Activated CD4-positive, alpha-beta T cell treated with anti-CD3 and anti-CD28 coated beads for 36 hours (primary cell): ENCODE measurements at regions of chr17 and their contacts with region 1.

Region 1: DNA sequence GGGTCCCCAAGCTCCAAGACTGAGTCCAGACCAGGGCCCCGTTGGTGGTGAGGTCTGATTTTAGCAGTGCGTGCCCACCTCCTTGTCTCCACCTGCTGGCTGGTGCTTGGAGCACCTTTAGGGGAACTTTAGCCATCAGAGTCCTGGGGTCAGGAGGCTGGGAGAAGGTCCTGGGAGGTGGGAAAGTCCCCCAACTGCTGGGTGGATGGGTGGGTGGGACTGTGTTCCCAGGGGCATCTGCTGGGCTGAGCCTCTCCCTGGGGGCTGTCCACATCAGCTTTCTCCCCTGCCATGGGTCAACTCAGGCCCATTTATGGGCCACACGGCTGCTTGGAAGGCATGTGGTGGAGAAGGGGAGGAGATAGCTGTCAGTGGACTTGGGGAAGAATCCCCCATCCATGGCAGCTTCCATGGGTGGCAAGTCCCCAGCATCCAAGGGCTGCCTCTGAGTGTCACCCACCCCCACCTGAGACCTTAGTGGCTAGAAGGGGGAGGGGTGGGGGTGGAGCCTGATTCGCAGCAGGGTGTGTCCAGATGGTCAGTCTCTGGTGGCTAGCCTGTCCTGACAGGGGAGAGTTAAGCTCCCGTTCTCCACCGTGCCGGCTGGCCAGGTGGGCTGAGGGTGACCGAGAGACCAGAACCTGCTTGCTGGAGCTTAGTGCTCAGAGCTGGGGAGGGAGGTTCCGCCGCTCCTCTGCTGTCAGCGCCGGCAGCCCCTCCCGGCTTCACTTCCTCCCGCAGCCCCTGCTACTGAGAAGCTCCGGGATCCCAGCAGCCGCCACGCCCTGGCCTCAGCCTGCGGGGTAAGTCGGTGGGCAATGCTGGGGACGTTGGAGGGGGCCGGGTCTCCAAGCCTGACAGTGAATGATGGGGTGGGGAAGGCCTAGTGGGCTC is at the start of gene TRPV2:
- DNase-seq: peak; percentile 72
- ATAC-seq: peak; percentile 15
- H3K4me3 Mint-ChIP-seq: peak within 1 kb of the TSS; percentile 100
- H3K27ac Mint-ChIP-seq: peak within 1 kb of the TSS; percentile 99
- H3K4me1 Mint-ChIP-seq: peaks cover 46% of the 10 kb centered on the region
- H3K27me3 Mint-ChIP-seq: no peaks in the 10 kb centered on the region
- total RNA-seq, gene TRPV2: 24.3 to 35.6 TPM

Region 2: DNA sequence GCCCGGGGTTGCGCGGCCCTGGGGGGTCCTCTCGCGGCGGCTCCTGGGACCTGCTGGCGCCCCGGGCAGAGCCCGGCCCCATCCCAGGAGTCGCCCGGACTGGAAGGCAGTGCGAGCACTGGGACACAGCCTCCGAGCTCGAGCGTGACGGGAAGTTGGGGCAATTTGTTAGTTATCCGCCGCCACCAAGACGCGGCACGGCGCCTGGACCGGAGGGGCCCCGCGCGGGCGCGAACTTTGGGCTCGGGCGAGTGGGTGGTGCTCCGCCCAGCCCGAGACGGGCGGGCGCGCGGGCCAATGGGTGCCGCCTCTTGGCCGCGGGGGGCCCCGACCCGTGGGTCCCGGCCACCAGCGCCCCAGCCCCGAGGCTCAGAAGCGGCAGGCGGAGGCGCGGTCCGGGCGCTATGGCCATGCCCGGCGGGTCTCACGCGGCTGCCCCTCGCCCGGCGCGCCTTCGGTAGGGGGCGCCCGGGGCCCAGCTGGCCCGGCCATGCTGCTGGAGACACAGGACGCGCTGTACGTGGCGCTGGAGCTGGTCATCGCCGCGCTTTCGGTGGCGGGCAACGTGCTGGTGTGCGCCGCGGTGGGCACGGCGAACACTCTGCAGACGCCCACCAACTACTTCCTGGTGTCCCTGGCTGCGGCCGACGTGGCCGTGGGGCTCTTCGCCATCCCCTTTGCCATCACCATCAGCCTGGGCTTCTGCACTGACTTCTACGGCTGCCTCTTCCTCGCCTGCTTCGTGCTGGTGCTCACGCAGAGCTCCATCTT is 470.3 kb before region 1 on chr17 and contains the start of gene ADORA2B:
- CTCF ChIA-PET with region 1: no interaction called
- POLR2A ChIA-PET with region 1: no interaction called
- intact Hi-C with region 1: loop called in 1 of 2 experiments (anchors 5 kb)
- DNase-seq: peak; percentile 77
- ATAC-seq: peak; percentile 80
- H3K4me3 Mint-ChIP-seq: peak within 1 kb of the TSS; percentile 72
- H3K27ac Mint-ChIP-seq: peak within 1 kb of the TSS; percentile 52
- H3K4me1 Mint-ChIP-seq: peaks cover 13% of the 10 kb centered on the region
- H3K27me3 Mint-ChIP-seq: peaks cover 42% of the 10 kb centered on the region
- total RNA-seq, gene ADORA2B: 1.9 to 2.2 TPM

Region 3: DNA sequence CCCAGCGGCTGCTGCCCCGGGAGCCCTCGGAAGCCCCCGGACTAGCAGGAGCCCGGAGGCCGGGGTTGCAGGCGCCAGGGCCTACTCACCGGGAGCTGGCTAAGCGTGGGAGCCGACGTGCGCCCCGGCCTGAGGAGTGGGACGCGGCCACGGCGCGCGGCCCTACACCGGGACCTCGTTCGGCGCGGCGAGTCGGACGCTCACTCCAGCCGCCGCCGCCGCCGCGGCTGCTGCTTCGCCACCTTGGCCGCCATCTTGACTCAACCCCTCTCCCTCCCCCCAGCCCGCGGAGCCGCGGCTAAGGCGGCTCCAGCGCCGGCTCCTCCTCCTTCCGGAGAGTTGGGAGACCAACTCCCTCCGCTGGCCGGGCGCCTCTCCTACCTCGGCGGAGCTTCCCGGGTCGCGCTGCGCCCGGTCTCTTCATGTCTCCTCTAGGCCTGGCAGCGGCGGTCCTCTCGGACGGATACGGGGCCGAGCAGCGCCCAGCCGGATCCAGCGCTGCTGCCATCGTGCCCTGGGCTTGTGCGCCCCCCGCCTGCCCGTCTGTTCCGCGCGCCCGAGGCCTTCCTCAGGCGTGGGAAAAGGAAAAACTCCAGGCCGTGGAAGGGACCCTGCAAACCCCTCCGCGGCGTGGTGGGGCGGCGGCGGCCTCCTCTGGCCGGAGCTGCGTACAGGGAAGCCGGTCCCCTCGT is 199.9 kb before region 1 on chr17 and contains the start of gene NCOR1:
- CTCF ChIA-PET with region 1: no interaction called
- POLR2A ChIA-PET with region 1: no interaction called
- intact Hi-C with region 1: loop called in 1 of 2 experiments (anchors 2 kb)
- DNase-seq: peak; percentile 96
- ATAC-seq: peak; percentile 87
- H3K4me3 Mint-ChIP-seq: peak within 1 kb of the TSS; percentile 93
- H3K27ac Mint-ChIP-seq: peak within 1 kb of the TSS; percentile 81
- H3K4me1 Mint-ChIP-seq: peaks cover 42% of the 10 kb centered on the region
- H3K27me3 Mint-ChIP-seq: no peaks in the 10 kb centered on the region
- total RNA-seq, gene NCOR1: 110 to 155 TPM

Region 4: DNA sequence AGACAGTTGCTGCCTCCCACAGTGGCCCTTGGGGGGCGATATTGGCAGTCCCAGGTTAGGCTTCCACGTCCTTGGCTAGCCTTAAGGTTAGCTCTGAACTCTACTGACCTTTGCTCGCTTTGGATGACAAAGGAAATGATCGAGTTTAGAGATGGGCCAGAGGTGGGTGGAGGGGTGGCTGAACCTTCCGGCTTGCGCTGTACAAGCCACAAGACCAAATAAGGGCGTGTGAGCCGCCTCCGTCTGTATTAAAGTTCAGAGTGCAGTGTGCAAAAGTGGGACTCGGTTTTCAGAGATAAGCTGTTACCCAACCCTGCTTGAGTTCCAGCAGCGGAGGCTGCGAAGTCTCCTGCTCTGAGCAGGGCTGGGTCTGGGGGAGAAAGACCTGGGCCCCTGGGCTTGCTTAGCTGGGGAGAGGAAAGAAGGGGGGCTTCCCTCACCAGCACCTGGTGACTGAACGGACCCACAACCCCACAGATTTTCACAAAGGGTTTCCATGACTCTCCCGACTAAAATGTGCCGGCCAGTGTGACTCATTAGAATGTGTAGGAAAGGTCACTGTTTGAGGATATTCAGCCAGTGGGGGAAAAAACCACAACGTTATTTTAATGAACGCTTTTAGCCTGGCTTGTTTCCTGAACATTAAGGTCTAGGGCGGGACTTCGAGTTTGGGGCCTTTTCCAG is 129.2 kb before region 1 on chr17:
- CTCF ChIA-PET with region 1: interaction called, 3 read pairs
- POLR2A ChIA-PET with region 1: no interaction called
- intact Hi-C with region 1: loop called in 1 of 2 experiments (anchors 2 kb)
- DNase-seq: peak; percentile 90
- ATAC-seq: peak; percentile 94
- H3K4me3 Mint-ChIP-seq: peak overlapping the region; percentile 66
- H3K27ac Mint-ChIP-seq: peak overlapping the region; percentile 96
- H3K4me1 Mint-ChIP-seq: peaks cover 53% of the 10 kb centered on the region
- H3K27me3 Mint-ChIP-seq: no peaks in the 10 kb centered on the region

Region 5: GRCh38 chr17:16353317-16354174 is 61.7 kb before region 1 on chr17 and contains the start of gene CENPV:
- CTCF ChIA-PET with region 1: interaction called, 3 read pairs
- POLR2A ChIA-PET with region 1: no interaction called
- intact Hi-C with region 1: loop called in 1 of 2 experiments (anchors 2 kb)
- DNase-seq: peak; percentile 81
- ATAC-seq: peak; percentile 82
- H3K4me3 Mint-ChIP-seq: peak within 1 kb of the TSS; percentile 97
- H3K27ac Mint-ChIP-seq: peak within 1 kb of the TSS; percentile 84
- H3K4me1 Mint-ChIP-seq: peaks cover 22% of the 10 kb centered on the region
- H3K27me3 Mint-ChIP-seq: no peaks in the 10 kb centered on the region
- total RNA-seq, gene CENPV: 100 to 132 TPM

Region 6: DNA sequence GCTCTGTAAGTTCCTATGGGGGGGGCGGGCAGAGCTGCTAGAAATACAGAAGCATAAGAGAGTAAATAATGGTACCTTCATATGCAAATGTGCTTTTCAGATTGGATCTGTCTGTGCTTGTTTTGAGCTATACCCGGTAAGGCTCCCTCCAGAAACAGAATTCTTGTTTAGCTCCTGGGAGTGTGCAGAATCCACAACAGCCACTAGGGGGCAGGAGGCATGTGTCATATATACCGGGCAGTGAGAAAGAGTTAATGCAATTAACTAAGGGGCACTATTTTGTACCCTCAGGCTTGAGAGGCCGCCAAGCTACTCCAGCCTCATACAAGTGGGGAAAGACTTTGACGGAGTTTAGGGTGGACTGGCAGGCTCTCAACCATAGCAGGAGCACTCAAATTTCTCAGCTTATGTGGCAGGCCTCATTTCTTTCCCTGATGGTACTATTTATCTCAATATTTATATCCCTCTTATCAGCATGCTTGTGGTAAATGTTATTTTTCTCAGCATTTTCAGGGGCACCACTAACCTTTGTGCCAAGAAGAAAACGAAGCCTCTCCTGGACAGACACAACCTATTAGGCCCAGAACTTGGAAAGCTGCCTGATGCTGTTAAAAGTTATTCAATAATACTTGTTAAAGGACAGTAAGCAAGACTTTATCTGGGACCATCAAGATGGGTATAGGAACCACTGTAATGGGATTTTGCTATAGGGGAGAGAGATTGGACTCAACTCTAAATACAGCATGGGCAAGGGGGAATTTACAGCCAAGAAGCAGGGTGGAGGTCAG is 51.3 kb before region 1 on chr17:
- CTCF ChIA-PET with region 1: interaction called, 29 read pairs
- POLR2A ChIA-PET with region 1: interaction called, 3 read pairs
- intact Hi-C with region 1: loop called (anchors 1 to 10 kb)
- DNase-seq: peak; percentile 89
- ATAC-seq: peak; percentile 98
- H3K4me3 Mint-ChIP-seq: no peak overlapping the region
- H3K27ac Mint-ChIP-seq: no peak overlapping the region
- H3K4me1 Mint-ChIP-seq: no peaks in the 10 kb centered on the region
- H3K27me3 Mint-ChIP-seq: no peaks in the 10 kb centered on the region

Region 7: GRCh38 chr17:16453493-16453851 is 38.2 kb after region 1 on chr17:
- CTCF ChIA-PET with region 1: no interaction called
- POLR2A ChIA-PET with region 1: no interaction called
- intact Hi-C with region 1: no loop called
- DNase-seq: no peak
- ATAC-seq: no peak
- H3K4me3 Mint-ChIP-seq: no peak overlapping the region
- H3K27ac Mint-ChIP-seq: no peak overlapping the region
- H3K4me1 Mint-ChIP-seq: peaks cover 13% of the 10 kb centered on the region
- H3K27me3 Mint-ChIP-seq: no peaks in the 10 kb centered on the region

Region 8: DNA sequence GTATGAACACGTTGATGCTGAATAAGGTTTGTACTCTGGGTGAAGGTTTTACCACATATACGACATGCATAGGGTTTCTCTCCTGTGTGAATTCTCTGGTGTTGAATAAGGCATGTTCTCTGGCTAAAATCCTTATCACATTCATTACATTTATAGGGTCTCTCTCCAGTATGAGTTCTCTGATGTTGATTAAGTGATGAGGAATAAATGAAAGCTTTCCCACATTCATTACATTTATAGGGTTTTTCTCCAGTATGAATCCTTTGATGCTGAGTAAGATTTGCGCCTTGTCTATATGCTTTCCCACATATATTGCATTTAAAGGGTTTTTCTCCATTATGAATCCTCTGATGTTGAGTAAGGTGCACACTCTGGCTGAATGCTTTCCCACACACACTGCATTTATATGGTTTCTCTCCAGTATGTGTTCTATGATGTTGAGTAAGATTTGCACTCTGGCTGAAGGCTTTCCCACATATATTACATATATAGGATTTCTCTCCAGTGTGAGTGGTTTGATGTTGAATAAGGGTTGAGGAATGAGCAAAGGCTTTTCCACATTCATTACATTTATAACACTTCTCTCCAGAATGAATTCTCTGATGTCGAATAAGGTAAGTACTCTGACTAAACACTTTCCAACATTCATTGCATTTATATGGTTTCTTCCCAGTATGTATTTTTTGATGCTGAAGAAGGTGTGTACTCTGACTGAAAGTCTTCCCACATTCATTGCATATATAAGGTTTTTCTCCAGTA is 136.8 kb after region 1 on chr17:
- CTCF ChIA-PET with region 1: no interaction called
- POLR2A ChIA-PET with region 1: no interaction called
- intact Hi-C with region 1: no loop called
- DNase-seq: no peak
- ATAC-seq: no peak
- H3K4me3 Mint-ChIP-seq: no peak overlapping the region
- H3K27ac Mint-ChIP-seq: no peak overlapping the region
- H3K4me1 Mint-ChIP-seq: no peaks in the 10 kb centered on the region
- H3K27me3 Mint-ChIP-seq: no peaks in the 10 kb centered on the region

Region 9: GRCh38 chr17:17959520-17960361 is 1544.5 kb after region 1 on chr17:
- CTCF ChIA-PET with region 1: no interaction called
- POLR2A ChIA-PET with region 1: no interaction called
- intact Hi-C with region 1: loop called in 1 of 2 experiments (anchors 5 kb)
- DNase-seq: peak; percentile 67
- ATAC-seq: peak; percentile 61
- H3K4me3 Mint-ChIP-seq: peak overlapping the region; percentile 71
- H3K27ac Mint-ChIP-seq: peak overlapping the region; percentile 95
- H3K4me1 Mint-ChIP-seq: peaks cover 69% of the 10 kb centered on the region
- H3K27me3 Mint-ChIP-seq: no peaks in the 10 kb centered on the region